Caco-2 (cell line): ENCODE measurements at regions of chrX and their contacts with region 1.

Region 1: GRCh38 chrX:2595258-2595657 is 94.5 kb upstream of the DHRSX start:
- DNase-seq: no peak
- H3K4me3 ChIP-seq: no peak overlapping the region
- H3K4me3 Mint-ChIP-seq: no peak overlapping the region
- H3K27ac Mint-ChIP-seq: no peak overlapping the region
- H3K4me1 ChIP-seq: peaks cover 31% of the 10 kb centered on the region
- H3K4me1 Mint-ChIP-seq: peaks cover 16% of the 10 kb centered on the region
- H3K27me3 ChIP-seq: no peaks in the 10 kb centered on the region
- H3K27me3 Mint-ChIP-seq: no peaks in the 10 kb centered on the region
- CTCF ChIP-seq: no peak

Region 2: DNA sequence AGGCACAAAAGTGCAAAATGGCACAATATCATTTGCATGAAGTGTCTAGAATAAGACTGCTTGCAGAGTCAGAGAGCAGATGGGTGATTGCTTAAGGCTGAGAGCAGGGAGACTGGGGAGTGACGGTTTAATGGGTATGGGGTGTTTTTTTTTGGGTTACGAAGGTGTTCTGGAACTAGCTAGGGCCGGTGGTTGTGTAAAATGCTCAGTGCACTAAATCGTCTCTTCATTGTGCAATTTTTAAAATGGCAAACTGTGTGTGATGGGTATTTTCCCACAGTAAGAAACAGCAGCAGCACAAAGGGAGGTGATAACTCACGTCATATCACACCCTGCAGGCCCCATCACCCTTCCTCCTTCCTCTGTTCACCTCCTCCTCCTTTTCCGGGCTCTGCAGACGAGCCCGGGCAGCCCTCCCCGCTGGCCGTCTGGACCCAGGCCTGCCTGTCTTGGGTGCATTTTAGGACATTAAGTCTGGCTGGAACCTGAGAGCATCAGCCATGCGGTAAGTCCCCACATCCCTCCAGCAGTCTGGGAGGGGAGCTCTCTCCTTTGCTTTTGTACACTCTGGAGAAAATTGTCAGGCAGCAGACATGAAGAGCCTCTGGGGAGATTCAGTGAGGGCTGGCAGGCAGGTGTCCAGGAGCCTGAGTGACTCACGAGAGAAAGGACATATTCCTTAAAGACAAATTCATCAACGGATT is 937.7 kb before region 1 on chrX:
- CTCF ChIA-PET with region 1: no interaction called
- POLR2A ChIA-PET with region 1: no interaction called
- intact Hi-C with region 1: loop called (anchors 2 kb)
- DNase-seq: no peak
- H3K4me3 ChIP-seq: no peak overlapping the region
- H3K4me3 Mint-ChIP-seq: peak overlapping the region; percentile 21
- H3K27ac Mint-ChIP-seq: peak overlapping the region; percentile 52
- H3K4me1 ChIP-seq: no peaks in the 10 kb centered on the region
- H3K4me1 Mint-ChIP-seq: peaks cover 8% of the 10 kb centered on the region
- H3K27me3 ChIP-seq: no peaks in the 10 kb centered on the region
- H3K27me3 Mint-ChIP-seq: no peaks in the 10 kb centered on the region
- CTCF ChIP-seq: no peak

Region 3: DNA sequence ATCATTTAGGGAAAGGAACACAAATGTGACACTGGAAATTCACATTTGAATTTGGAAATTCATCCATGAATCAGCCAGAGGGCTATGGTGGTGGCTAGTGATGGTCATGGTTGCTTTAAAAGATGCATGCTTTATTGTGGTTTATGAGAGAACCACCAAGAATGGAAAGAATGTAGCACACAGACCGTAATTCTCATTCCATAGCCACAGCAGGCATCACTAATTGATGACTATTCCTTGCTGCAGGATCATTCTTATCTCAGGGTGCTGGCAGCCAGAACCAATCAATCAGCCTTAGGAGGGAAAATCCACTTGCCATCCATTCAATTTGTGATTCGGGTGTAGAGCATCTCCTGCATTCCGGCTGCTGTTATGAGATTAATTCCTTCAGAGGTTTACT is 210.0 kb before region 1 on chrX:
- CTCF ChIA-PET with region 1: no interaction called
- POLR2A ChIA-PET with region 1: no interaction called
- intact Hi-C with region 1: no loop called
- DNase-seq: no peak
- H3K4me3 ChIP-seq: no peak overlapping the region
- H3K4me3 Mint-ChIP-seq: no peak overlapping the region
- H3K27ac Mint-ChIP-seq: no peak overlapping the region
- H3K4me1 ChIP-seq: no peaks in the 10 kb centered on the region
- H3K4me1 Mint-ChIP-seq: no peaks in the 10 kb centered on the region
- H3K27me3 ChIP-seq: no peaks in the 10 kb centered on the region
- H3K27me3 Mint-ChIP-seq: no peaks in the 10 kb centered on the region
- CTCF ChIP-seq: no peak

Region 4: GRCh38 chrX:2584251-2585157 is 10.8 kb before region 1 on chrX:
- CTCF ChIA-PET with region 1: no interaction called
- POLR2A ChIA-PET with region 1: no interaction called
- intact Hi-C with region 1: no loop called
- DNase-seq: no peak
- H3K4me3 ChIP-seq: no peak overlapping the region
- H3K4me3 Mint-ChIP-seq: no peak overlapping the region
- H3K27ac Mint-ChIP-seq: peak overlapping the region; percentile 7
- H3K4me1 ChIP-seq: peaks cover 4% of the 10 kb centered on the region; the same call in 1 of the 2 replicates
- H3K4me1 Mint-ChIP-seq: peaks cover under 1% of the 10 kb centered on the region
- H3K27me3 ChIP-seq: no peaks in the 10 kb centered on the region
- H3K27me3 Mint-ChIP-seq: no peaks in the 10 kb centered on the region
- CTCF ChIP-seq: no peak

Region 5: GRCh38 chrX:2679534-2680485 is 84.6 kb after region 1 on chrX:
- CTCF ChIA-PET with region 1: no interaction called
- POLR2A ChIA-PET with region 1: no interaction called
- intact Hi-C with region 1: no loop called
- DNase-seq: no peak
- H3K4me3 ChIP-seq: no peak overlapping the region
- H3K4me3 Mint-ChIP-seq: no peak overlapping the region
- H3K27ac Mint-ChIP-seq: no peak overlapping the region
- H3K4me1 ChIP-seq: peaks cover 25% of the 10 kb centered on the region
- H3K4me1 Mint-ChIP-seq: peaks cover 17% of the 10 kb centered on the region
- H3K27me3 ChIP-seq: no peaks in the 10 kb centered on the region
- H3K27me3 Mint-ChIP-seq: no peaks in the 10 kb centered on the region
- CTCF ChIP-seq: no peak

Region 6: DNA sequence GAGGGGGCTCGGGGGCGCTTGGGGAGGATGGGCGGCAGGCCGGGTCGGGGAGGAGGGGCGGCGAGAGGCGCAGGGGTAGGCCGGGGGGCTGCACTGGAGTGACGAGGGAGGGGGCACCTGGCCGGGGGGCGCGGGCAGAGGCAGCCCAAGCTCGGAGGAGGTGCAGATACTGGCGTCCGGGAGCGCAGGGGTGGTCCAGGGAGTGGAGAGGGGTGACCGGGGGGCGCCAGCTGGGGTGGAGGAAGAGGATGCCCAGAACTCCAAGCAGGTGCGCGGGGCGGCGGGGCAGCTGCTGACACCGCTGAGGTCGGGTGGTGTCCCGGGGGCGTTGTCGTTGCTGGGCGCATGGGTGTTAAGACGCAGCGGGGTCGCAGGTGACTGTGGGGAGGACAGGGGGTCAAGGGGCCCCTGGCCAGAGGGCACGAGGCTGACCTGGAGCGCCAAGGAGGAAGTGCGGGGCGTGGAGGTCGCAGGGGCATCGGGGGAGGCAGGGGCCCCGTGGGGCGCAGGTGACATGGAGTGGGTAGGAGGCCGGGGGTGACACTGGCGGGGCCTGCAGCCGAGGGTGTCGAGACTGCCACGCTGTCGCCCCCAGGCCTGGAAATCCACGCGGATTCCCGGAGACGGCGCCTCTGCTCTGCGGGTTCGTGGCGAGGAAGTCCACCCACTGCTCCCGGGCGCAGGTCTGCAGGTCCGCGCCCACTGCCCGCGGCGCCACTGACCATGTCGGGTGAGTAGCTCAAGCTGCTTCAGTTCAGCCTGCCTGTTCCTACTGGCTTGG is 234.4 kb after region 1 on chrX:
- CTCF ChIA-PET with region 1: no interaction called
- POLR2A ChIA-PET with region 1: no interaction called
- intact Hi-C with region 1: no loop called
- DNase-seq: no peak
- H3K4me3 ChIP-seq: peak overlapping the region; percentile 68
- H3K4me3 Mint-ChIP-seq: peak overlapping the region; percentile 60
- H3K27ac Mint-ChIP-seq: no peak overlapping the region
- H3K4me1 ChIP-seq: 0 out of 2 replicates have a peak, but pooled peaks cover 5% of the 10 kb centered on the region
- H3K4me1 Mint-ChIP-seq: no peaks in the 10 kb centered on the region
- H3K27me3 ChIP-seq: no peaks in the 10 kb centered on the region
- H3K27me3 Mint-ChIP-seq: no peaks in the 10 kb centered on the region
- CTCF ChIP-seq: no peak